ENCODE measurements at regions of chr1 and their contacts with region 1.

Region 1: DNA sequence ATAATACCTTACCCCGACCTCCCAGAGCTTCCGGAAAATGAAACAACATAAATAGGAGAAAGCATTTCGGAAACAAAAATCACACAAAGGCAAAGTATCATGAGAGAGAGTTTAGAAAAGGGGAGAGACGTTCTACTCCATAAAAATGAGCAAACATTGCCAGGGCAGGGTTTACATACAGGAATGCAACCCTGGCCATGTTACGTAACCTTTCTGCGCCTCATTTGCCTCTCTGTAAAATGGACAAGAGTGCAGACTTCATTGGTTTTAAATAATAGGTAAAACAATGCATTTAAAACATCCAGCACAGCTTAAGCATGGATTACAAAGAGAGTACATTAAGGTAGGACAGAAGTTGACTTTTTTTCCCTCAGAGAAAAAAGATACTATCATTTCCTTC is 45.6 kb downstream of the PHC2 start:
- DNase-seq: no peak
- ATAC-seq: no peak

Region 2: GRCh38 chr1:32817159-32817814 is 568.0 kb before region 1 on chr1 and contains the starts of genes S100PBP and YARS1:
- intact Hi-C with region 1: no loop called
- DNase-seq: peak; percentile 99
- ATAC-seq: peak; percentile 99
- total RNA-seq, gene S100PBP: 59.8 TPM
- total RNA-seq, gene YARS1: 46.8 TPM

Region 3: DNA sequence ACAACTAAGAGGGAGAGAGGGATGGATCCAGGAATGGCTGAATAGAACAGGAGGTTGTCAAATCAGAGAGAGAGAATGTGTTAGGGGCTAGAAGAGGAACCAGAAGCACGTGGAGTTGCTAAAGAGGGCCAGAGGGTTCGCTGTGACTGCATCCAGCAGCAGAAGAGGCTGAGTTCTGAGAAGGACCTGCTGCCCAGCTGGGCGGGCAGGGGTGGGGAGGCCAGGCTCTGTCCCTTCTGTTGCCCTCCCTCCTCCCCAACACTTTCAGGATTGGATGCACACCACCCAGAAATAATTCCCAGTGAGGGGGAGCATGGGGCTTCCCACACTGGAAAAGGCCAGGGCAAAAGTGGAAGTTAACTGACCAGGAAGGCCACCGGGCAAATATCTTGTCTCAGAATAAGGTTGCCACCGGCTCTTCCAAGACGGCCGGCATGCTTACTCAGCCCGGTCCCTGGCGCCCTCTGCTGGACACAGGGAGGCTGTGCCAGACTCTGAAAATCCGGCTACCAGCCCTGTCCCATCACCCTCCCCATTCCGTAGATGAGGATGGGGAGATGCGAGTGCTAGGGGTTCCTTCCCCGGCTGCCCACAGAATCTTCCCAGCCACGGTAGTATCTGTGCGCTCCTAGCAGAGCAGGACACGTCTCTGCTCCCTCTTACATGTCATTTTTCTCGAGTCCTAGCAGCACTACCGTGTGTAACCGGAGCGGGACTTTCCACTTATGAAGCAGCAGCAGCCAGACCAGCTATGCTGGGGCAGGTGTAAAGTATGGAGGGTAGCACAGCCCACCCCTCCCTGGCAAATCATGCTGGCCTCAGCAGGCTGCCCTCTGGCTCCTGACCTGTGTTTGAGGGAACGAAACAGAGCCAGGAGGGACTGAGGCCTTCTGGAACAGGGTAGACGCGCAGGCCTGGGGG is 17.5 kb before region 1 on chr1:
- intact Hi-C with region 1: no loop called
- DNase-seq: peak; percentile 95
- ATAC-seq: peak; percentile 79

Region 4: DNA sequence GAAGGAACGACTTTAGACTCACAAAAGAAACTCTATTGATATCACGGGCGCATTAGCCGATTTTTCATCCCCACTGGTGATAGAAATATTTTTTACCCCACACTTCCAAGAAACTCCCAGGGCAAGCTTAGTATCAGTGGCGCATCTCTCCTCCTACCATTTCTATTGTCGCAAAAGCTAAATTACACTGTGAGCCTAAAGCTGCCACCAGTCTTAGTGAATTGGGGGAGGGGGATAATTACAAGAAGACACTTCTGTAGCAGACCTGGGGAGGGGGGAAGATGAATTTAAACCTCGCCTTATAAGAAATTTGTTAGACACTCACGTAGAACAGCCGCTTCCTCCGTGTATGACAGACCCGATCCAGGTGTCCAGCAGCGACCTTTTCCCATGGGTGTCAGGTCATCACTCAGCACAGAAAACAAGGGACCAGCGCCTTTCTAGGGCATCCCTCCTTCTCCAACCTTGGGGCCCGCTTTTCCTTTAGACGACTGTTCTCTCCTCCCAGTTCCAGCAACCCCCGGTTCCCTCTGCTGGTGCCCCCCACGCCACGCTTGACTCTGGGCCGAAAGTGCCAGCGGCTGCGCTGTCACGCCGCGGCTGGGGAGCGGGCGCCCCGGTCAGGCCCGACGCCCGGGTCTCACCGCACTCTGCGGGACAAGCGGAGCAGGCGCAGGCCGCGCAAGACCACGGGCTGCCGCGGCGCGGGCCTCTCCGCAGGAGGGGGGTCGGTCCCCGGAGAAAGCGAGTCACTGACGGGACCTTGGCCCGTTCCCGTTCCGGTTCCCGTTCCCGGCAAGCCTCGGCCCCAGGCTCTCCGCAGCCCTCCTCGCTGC is 44.8 kb after region 1 on chr1:
- intact Hi-C with region 1: loop called (anchors 1 kb)
- DNase-seq: peak; percentile 63
- ATAC-seq: no peak